ENCODE measurements at regions of chr3 and their contacts with region 1.

Region 1: DNA sequence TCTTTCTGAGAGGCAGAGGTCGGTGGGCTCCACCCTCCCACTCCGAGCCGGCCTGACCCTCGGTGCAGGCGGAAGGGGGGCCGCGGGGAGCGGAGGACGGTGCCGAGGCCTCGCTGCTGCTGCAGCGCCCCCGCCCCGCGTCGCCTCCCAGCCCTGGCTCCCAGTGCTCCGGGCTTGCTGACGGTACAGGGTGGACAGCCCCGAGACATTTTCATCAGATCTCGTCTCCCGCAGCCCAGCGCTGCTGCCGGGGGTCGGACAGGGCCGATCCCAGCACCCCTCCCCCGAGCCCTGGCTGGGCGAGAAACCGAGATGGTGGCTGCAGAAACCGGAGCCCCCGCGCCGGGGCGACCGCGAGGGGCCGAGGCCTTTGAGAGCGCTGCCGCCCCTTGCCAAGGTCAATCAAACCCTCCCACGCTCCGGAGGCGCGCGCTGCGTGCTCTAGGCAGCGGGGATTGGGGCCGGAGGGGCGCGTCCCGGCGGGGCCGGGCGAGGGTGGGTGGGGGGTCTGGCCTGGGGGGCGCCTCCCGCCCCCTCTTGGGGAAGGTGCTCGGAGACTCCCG is 42.5 kb downstream of the EPHB3 start:
- DNase-seq: no peak
- H3K4me3 ChIP-seq: peak overlapping the region; percentile 14 to 71 (median 31)
- H3K4me3 Mint-ChIP-seq: peak overlapping the region; percentile 83 to 97
- H3K27ac ChIP-seq: no peak overlapping the region
- H3K27ac Mint-ChIP-seq: no peak overlapping the region
- H3K4me1 ChIP-seq: peaks cover 58 to 78% of the 10 kb centered on the region in 2 donors
- H3K4me1 Mint-ChIP-seq: peaks cover 68% of the 10 kb centered on the region
- H3K27me3 ChIP-seq: peaks cover 9 to 34% of the 10 kb centered on the region in 2 donors
- H3K27me3 Mint-ChIP-seq: peaks cover 39 to 64% (median 48%) of the 10 kb centered on the region in 3 donors
- CTCF ChIP-seq: no peak

Region 2: GRCh38 chr3:184636741-184637316 is 32.7 kb after region 1 on chr3:
- intact Hi-C with region 1: loop called in 1 of 2 experiments (anchors 5 kb)
- DNase-seq: peak in 2 of 3 donors; percentile 37 to 52
- H3K4me3 ChIP-seq: peak overlapping the region in 1 of 3 experiments; percentile 29
- H3K4me3 Mint-ChIP-seq: peak overlapping the region; percentile 5 to 36
- H3K27ac ChIP-seq: peak overlapping the region; percentile 65 to 75
- H3K27ac Mint-ChIP-seq: peak overlapping the region in 2 of 7 donors; percentile 68 to 71
- H3K4me1 ChIP-seq: peaks cover 58 to 59% of the 10 kb centered on the region in 2 donors
- H3K4me1 Mint-ChIP-seq: peaks cover 10% of the 10 kb centered on the region
- H3K27me3 ChIP-seq: no peaks in the 10 kb centered on the region
- H3K27me3 Mint-ChIP-seq: no peaks in the 10 kb centered on the region
- CTCF ChIP-seq: no peak

Measured in CD14-positive monocyte (primary cell).